Dendritic cell treated with granulocyte-macrophage colony-stimulating factor and Interleukin-4, amounts not matched to agents 40 ng/mL and 50 ng/mL, for 4 days (primary cell): ENCODE measurements at regions of chr7 and their contacts with region 1.

Region 1: DNA sequence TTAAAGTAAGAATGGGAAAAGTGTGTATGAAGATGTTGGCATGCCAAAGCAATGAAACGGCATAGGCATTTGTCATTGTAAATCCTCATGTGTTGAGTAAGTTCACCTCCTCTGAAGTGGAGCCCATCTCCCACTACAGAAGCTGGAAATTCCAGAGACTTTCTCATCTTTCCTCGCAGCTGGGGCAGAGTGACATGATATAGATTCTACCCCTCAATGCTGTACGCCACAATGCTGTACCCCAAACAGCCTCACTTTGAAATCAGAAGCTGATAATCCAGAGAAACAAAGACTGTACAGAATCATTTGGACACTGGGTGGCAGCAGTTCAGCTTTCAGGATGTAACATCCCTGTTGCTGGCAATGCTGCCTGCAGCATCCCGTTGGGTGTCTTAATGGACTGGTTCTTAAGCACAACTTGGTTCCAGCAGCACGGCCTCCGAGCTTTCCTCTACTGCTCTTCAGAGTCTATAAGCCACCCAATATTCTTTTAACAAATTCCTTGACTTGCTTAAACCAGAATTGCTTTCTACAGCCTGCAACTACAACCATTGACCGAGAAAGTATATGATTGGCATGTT is 18.8 kb downstream of the ZC3HAV1L start:
- H3K4me3 Mint-ChIP-seq: no peak overlapping the region
- H3K27ac Mint-ChIP-seq: no peak overlapping the region
- H3K4me1 Mint-ChIP-seq: no peaks in the 10 kb centered on the region
- H3K27me3 Mint-ChIP-seq: peaks cover 4% of the 10 kb centered on the region

Region 2: DNA sequence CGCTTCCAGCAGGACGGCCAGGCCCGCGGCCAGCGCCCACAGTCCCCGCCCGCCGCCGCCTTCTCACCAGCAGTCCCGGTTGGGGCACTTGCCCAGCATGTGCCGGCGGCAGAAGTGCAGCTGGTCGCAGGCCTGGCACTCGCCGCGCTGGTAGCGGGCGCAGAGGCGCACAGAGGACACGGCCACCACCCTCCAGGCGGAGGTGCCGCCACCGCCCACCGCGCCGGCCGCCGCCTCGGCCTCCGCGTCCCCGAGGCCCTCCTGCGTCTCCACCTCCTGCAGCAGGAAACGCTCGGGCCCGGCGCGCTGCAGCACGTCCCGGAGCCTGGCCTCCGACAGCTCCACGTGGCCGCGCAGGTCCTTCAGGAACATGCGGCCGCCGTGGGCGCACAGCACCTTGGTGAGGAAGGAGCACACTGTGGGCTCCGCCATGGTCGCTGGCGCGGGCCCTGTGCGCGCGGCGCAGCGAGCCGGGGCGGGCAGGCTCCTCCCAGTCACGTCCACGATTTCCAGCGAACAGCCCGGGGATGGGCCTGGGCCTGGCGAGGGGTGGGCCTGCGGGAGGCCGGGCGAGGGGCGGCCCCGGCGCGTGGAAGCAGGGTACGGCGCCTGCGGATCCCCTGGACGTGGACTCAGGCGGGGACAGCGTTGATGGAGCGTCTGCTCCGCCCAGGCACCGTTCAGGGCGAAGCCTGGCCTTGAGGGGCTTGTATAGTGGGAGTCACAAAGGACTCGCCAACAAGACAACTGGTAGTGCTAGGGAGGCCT is 18.7 kb after region 1 on chr7 and contains the start of gene ZC3HAV1L:
- intact Hi-C with region 1: no loop called
- H3K4me3 Mint-ChIP-seq: peak within 1 kb of the TSS; percentile 81
- H3K27ac Mint-ChIP-seq: peak within 1 kb of the TSS; percentile 75
- H3K4me1 Mint-ChIP-seq: peaks cover 33% of the 10 kb centered on the region
- H3K27me3 Mint-ChIP-seq: peaks cover 18% of the 10 kb centered on the region

Region 3: GRCh38 chr7:139075031-139075652 is 58.1 kb after region 1 on chr7:
- intact Hi-C with region 1: loop called (anchors 5 kb)
- H3K4me3 Mint-ChIP-seq: no peak overlapping the region
- H3K27ac Mint-ChIP-seq: no peak overlapping the region
- H3K4me1 Mint-ChIP-seq: peaks cover 23% of the 10 kb centered on the region
- H3K27me3 Mint-ChIP-seq: no peaks in the 10 kb centered on the region

Region 4: DNA sequence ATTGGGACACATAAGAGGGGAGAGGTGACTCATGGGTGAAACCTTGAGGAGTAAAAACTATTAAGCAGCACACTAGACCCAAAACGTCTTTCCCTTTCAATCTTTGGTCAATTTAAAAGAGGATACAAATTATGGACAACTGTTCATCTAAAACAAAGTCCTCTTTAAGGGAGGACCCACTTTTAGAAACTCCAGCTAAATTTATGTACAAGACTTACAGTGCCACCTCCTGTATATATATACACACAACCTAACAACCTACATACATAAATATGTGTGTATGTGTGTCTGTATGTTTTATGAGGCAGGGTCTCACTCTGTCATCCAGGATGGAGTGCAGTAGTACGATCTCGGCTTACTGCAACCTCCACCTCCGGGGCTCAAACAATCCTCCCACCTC is 110.6 kb after region 1 on chr7:
- intact Hi-C with region 1: loop called (anchors 1 kb)
- H3K4me3 Mint-ChIP-seq: no peak overlapping the region
- H3K27ac Mint-ChIP-seq: no peak overlapping the region
- H3K4me1 Mint-ChIP-seq: peaks cover 21% of the 10 kb centered on the region
- H3K27me3 Mint-ChIP-seq: no peaks in the 10 kb centered on the region